Posterior cingulate gyrus (tissue), 11 donors: ENCODE measurements at regions of chr19 and their contacts with region 1.

Region 1: GRCh38 chr19:29735800-29736199 is 20.7 kb upstream of the C19orf12 start:
- DNase-seq: peak in 1 of 10 donors; percentile 20

Region 2: DNA sequence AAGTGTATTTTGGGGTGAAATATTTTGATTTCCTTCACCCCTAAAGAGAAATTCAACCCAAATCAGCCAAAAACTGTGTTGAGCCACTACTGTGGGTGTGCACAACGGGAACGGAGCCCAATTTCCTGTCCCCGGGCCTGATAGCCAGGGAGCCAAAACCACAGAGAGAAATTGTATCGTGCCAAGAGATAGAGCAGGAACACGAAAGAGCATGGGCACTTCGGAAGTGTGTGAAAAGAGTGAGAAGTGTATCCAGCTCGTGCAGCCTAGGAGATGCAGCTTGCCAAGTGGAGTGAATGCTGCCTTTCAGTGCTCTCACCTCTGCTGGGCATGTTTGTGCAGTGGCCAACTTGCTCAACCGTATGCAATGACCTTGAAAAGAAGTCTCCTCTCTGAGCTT is 89.9 kb before region 1 on chr19:
- intact Hi-C with region 1: no loop called
- DNase-seq: peak in 3 of 10 donors; percentile 28 to 84 (median 68)

Region 3: GRCh38 chr19:29779921-29780320 is 44.1 kb after region 1 on chr19:
- intact Hi-C with region 1: no loop called
- DNase-seq: peak in 1 of 10 donors; percentile 47

Region 4: DNA sequence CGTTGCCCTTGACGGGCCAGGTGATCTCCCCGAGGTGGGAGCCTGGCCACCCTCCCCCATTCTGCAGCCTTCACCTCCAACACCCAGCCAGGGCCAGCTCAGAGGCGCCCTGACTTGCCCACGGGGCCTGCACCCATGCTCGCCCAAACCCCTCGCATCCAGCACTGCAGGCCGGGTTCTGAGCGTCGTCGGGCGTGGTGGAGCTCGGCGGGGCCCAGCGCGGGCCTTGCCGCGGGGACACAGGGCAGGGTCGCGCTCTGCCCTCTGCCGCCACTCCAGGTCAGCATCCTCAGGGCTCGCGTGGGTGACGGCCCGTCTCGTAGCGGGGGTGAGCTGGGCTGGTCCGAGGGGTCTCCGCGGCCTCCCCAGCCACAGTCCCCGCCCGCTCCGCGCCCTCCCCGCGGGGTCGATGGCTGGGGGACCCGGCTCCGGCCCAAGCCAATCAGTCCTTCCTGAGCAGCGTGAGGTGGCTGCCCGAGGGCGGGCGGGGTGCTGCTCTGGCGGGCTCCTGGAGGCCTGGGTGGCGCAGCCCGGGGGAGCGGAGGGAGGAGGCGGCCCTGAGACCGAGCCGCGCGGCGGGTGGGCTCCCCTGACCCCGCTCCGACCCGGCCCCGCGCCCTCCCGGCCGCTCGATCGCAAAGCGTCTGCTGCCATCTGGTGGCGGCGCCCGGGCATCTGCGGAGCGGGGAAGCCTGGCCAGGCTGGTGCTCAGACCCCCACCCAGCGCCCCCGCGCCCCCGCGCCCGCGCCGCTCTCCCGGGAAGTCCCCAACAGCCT is 137.4 kb after region 1 on chr19:
- intact Hi-C with region 1: loop called (anchors 1 kb)
- DNase-seq: peak; percentile 24 to 93 (median 62)

Region 5: GRCh38 chr19:30036191-30037129 is 300.7 kb after region 1 on chr19:
- intact Hi-C with region 1: no loop called
- DNase-seq: no peak